Activated CD8-positive, alpha-beta T cell treated with anti-CD3 and anti-CD28 coated beads, Interleukin-2, amount 10 ng/mL, durations not matched to agents 7 days and 5 days (primary cell): ENCODE measurements at regions of chr11 and their contacts with region 1.

Region 1: DNA sequence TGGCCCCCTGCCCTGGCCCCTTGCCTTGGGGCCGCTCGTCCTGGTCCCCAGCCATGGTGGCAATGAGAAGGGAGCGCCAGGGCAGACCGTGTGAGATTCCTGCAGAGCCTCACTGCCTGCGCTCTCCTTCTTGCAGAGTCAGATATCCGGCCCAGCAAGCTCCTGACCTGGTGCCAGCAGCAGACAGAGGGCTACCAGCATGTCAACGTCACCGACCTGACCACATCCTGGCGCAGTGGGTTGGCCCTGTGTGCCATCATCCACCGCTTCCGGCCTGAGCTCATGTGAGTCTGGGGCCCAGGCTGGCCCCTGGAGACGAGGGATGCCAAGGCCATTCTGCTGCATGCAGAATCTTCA is 114.1 kb downstream of the MICAL2 start:
- DNase-seq: peak; percentile 96
- ATAC-seq: peak; percentile 94
- H3K4me3 Mint-ChIP-seq: peak overlapping the region; percentile 60
- H3K27ac Mint-ChIP-seq: peak overlapping the region; percentile 97
- H3K4me1 Mint-ChIP-seq: peaks cover 51% of the 10 kb centered on the region
- H3K27me3 Mint-ChIP-seq: no peaks in the 10 kb centered on the region

Region 2: DNA sequence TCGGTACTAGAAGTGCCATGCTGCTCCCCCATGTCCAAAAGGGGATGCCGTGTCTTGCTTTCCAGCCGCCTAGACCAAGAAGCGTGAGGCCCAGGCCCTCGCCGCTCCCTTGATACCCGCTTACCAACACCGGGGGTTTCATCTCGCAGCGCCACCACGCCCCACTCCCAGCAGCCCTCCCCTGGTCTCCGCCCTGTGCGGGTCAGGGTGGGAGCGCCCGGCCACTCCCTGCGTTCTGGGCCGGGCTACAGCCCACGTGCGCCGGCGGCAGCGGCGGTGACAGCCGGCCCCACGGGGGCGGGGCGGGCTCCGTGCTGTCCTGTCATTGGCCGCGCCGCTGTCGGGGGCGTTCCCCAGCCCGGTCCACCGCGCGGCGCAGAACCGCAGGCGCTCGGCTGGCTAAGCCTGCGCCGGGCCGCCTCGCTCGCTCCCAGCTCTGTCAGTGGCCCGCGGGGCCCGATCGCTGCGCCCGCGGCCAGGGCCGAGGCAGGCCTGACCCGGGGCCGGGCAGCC is 114.3 kb before region 1 on chr11 and contains the start of gene MICAL2:
- CTCF ChIA-PET with region 1: interaction called, 4 read pairs
- POLR2A ChIA-PET with region 1: interaction called, 11 read pairs
- DNase-seq: peak; percentile 88
- ATAC-seq: peak; percentile 97
- H3K4me3 Mint-ChIP-seq: peak within 1 kb of the TSS; percentile 80
- H3K27ac Mint-ChIP-seq: peak within 1 kb of the TSS; percentile 89
- H3K4me1 Mint-ChIP-seq: peaks cover 47% of the 10 kb centered on the region
- H3K27me3 Mint-ChIP-seq: no peaks in the 10 kb centered on the region
- total RNA-seq, gene MICAL2: 34.9 to 37.5 TPM

Region 3: GRCh38 chr11:12137007-12137690 is 87.4 kb before region 1 on chr11:
- CTCF ChIA-PET with region 1: no interaction called
- POLR2A ChIA-PET with region 1: no interaction called
- DNase-seq: no peak
- ATAC-seq: no peak
- H3K4me3 Mint-ChIP-seq: no peak overlapping the region
- H3K27ac Mint-ChIP-seq: no peak overlapping the region
- H3K4me1 Mint-ChIP-seq: peaks cover 37% of the 10 kb centered on the region
- H3K27me3 Mint-ChIP-seq: no peaks in the 10 kb centered on the region

Region 4: DNA sequence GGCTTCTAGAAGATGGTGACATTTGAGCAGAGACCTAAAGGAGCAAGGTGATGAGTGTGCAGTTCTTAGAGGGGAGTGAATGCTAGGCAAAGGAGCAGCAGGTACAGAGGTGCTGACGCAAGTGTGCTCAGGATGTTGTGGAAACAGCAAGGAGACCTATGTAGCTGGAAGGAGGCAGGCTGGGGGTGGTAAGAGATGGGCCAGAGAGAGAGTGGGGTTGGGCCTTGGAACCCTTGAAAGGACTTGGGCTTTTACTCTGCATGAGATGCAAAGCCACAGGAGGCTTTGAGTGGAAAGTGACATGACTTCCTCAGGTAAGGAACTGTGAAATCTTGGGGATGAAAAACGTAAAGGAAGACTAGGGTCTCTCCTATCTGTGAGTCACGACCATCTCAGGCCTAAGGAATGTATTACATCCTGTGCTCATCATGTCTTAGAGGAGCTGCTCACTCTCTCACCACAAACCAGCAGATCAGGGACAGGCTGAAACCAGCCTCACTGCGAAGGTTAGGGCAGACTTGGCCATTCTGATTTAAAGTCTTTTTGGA is 48.7 kb before region 1 on chr11:
- CTCF ChIA-PET with region 1: interaction called, 6 read pairs
- POLR2A ChIA-PET with region 1: interaction called, 12 read pairs
- DNase-seq: no peak
- ATAC-seq: peak; percentile 78
- H3K4me3 Mint-ChIP-seq: no peak overlapping the region
- H3K27ac Mint-ChIP-seq: peak overlapping the region; percentile 86
- H3K4me1 Mint-ChIP-seq: peaks cover 65% of the 10 kb centered on the region
- H3K27me3 Mint-ChIP-seq: no peaks in the 10 kb centered on the region

Region 5: GRCh38 chr11:12200279-12201010 is 24.1 kb before region 1 on chr11:
- CTCF ChIA-PET with region 1: interaction called, 47 read pairs
- POLR2A ChIA-PET with region 1: interaction called, 42 read pairs
- DNase-seq: no peak
- ATAC-seq: no peak
- H3K4me3 Mint-ChIP-seq: no peak overlapping the region
- H3K27ac Mint-ChIP-seq: no peak overlapping the region
- H3K4me1 Mint-ChIP-seq: peaks cover 57% of the 10 kb centered on the region
- H3K27me3 Mint-ChIP-seq: no peaks in the 10 kb centered on the region

Region 6: GRCh38 chr11:12281571-12282478 is 57.3 kb after region 1 on chr11:
- CTCF ChIA-PET with region 1: interaction called, 15 read pairs
- POLR2A ChIA-PET with region 1: no interaction called
- DNase-seq: peak; percentile 82
- ATAC-seq: peak; percentile 66
- H3K4me3 Mint-ChIP-seq: no peak overlapping the region
- H3K27ac Mint-ChIP-seq: no peak overlapping the region
- H3K4me1 Mint-ChIP-seq: no peaks in the 10 kb centered on the region
- H3K27me3 Mint-ChIP-seq: peaks cover 3% of the 10 kb centered on the region

Region 7: GRCh38 chr11:12397931-12398334 is 173.4 kb after region 1 on chr11:
- CTCF ChIA-PET with region 1: no interaction called
- POLR2A ChIA-PET with region 1: no interaction called
- DNase-seq: no peak
- ATAC-seq: no peak
- H3K4me3 Mint-ChIP-seq: no peak overlapping the region
- H3K27ac Mint-ChIP-seq: no peak overlapping the region
- H3K4me1 Mint-ChIP-seq: no peaks in the 10 kb centered on the region
- H3K27me3 Mint-ChIP-seq: no peaks in the 10 kb centered on the region